Thyroid gland (tissue), 4 donors: ENCODE measurements at regions of chr5 and their contacts with region 1.

Region 1: GRCh38 chr5:91101600-91102379 is 281.3 kb downstream of the ARRDC3 start:
- DNase-seq: peak; percentile 72 to 79
- H3K4me3 ChIP-seq: no peak overlapping the region
- H3K27ac ChIP-seq: peak overlapping the region; percentile 0 to 48 (median 11)
- H3K4me1 ChIP-seq: peaks cover 9 to 12% of the 10 kb centered on the region in 2 donors
- H3K27me3 ChIP-seq: no peaks in the 10 kb centered on the region
- CTCF ChIP-seq: peak; percentile 40 to 96 (median 79)
- POLR2A ChIP-seq: no peak

Region 2: GRCh38 chr5:90932052-90932699 is 169.6 kb before region 1 on chr5:
- intact Hi-C with region 1: loop called (anchors 10 kb)
- DNase-seq: peak; percentile 53 to 60
- H3K4me3 ChIP-seq: no peak overlapping the region
- H3K27ac ChIP-seq: peak overlapping the region; percentile 60 to 87 (median 77)
- H3K4me1 ChIP-seq: peaks cover 29 to 34% of the 10 kb centered on the region in 2 donors
- H3K27me3 ChIP-seq: no peaks in the 10 kb centered on the region
- CTCF ChIP-seq: peak; percentile 69 to 96 (median 81)
- POLR2A ChIP-seq: peak in 1 of 2 donors; percentile 9

Region 3: DNA sequence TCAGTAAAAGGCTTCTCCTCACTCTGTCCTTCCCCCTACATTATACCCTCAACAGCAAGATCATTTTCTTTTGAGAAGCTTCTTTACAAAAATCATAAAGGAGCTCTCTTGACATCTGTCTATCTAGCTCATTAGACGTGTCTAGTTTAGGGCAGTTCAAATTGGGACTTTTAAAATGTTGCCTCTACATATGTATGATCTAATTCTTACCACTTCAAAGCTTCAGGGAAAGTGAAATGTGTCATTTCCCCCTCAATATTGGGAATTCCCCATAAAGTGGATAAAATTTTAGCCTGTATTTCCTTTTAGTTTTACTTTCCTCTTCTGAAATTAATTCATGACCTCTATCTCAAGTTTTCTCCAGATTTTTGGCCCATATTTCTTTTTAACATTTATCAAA is 42.4 kb before region 1 on chr5:
- intact Hi-C with region 1: no loop called
- DNase-seq: no peak
- H3K4me3 ChIP-seq: no peak overlapping the region
- H3K27ac ChIP-seq: no peak overlapping the region
- H3K4me1 ChIP-seq: peaks cover 21 to 29% of the 10 kb centered on the region in 2 donors
- H3K27me3 ChIP-seq: no peaks in the 10 kb centered on the region
- CTCF ChIP-seq: no peak
- POLR2A ChIP-seq: no peak